ENCODE measurements at regions of chr6 and their contacts with region 1.

Region 1: GRCh38 chr6:34459899-34460593 is 5.8 kb upstream of the PACSIN1 start:
- DNase-seq: no peak
- H3K4me3 ChIP-seq: no peak overlapping the region
- H3K27ac ChIP-seq: no peak overlapping the region
- H3K4me1 ChIP-seq: peaks cover 0 to 6% (median 0%) of the 10 kb centered on the region in 3 donors
- H3K27me3 ChIP-seq: peaks cover 0 to 23% (median 0%) of the 10 kb centered on the region in 4 donors
- CTCF ChIP-seq: peak; percentile 22 to 73 (median 60)
- POLR2A ChIP-seq: no peak

Region 2: GRCh38 chr6:34546551-34547321 is 86.7 kb after region 1 on chr6:
- intact Hi-C with region 1: no loop called
- DNase-seq: no peak
- H3K4me3 ChIP-seq: no peak overlapping the region
- H3K27ac ChIP-seq: peak overlapping the region in 1 of 4 donors; percentile 16
- H3K4me1 ChIP-seq: peaks cover 0 to 17% (median 6%) of the 10 kb centered on the region in 3 donors
- H3K27me3 ChIP-seq: peaks cover 0 to 3% (median 0%) of the 10 kb centered on the region in 4 donors
- CTCF ChIP-seq: no peak
- POLR2A ChIP-seq: no peak

Region 3: DNA sequence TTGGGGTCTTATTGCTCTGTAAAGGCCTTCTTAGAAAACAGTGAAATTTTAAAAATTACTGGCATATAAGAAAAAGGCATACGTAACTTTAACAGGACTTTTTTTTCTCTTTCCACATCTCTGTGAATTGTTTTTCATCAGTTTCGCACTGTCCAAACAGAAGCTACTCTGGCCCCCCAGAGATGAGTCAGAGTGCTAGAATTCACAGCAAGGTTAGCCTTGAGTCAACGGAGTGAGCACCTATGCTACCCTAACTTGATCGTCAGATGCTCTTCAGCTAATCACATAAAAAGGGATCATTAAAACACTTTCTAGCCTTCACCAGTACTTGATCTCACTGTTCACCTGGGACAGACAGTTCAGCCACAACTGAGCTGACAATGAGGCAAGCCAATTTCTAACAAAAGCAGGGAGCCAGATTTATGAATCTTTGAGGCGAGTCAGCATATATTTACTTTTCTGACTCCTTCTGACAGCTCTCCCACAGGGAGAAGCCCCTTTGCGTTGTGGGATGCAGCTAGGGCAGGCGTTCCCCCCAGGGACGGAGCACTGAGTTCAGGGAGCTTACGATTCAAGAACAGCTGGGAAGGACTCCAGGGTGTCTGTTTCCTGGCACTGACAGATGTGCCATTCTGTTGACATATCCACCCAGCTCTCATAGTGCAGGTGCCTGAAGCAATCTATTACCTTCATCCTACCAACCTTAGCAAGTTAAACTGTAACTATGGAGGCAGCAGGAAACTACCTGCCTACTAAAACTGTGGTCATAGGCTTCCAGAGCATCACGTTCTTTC is 142.5 kb after region 1 on chr6:
- intact Hi-C with region 1: loop called (anchors 10 kb)
- DNase-seq: no peak
- H3K4me3 ChIP-seq: no peak overlapping the region
- H3K27ac ChIP-seq: no peak overlapping the region
- H3K4me1 ChIP-seq: peaks cover 13 to 46% (median 17%) of the 10 kb centered on the region in 3 donors
- H3K27me3 ChIP-seq: no peaks in the 10 kb centered on the region
- CTCF ChIP-seq: no peak
- POLR2A ChIP-seq: no peak

Region 4: GRCh38 chr6:34657307-34657978 is 197.4 kb after region 1 on chr6:
- intact Hi-C with region 1: no loop called
- DNase-seq: no peak
- H3K4me3 ChIP-seq: peak overlapping the region; percentile 11 to 67 (median 34)
- H3K27ac ChIP-seq: peak overlapping the region; percentile 84 to 98 (median 92)
- H3K4me1 ChIP-seq: peaks cover 19 to 49% (median 32%) of the 10 kb centered on the region in 3 donors
- H3K27me3 ChIP-seq: no peaks in the 10 kb centered on the region
- CTCF ChIP-seq: no peak
- POLR2A ChIP-seq: no peak

Measured in esophagus squamous epithelium (tissue), 5 donors.